ENCODE measurements at regions of chr1 and their contacts with region 1.

Region 1: DNA sequence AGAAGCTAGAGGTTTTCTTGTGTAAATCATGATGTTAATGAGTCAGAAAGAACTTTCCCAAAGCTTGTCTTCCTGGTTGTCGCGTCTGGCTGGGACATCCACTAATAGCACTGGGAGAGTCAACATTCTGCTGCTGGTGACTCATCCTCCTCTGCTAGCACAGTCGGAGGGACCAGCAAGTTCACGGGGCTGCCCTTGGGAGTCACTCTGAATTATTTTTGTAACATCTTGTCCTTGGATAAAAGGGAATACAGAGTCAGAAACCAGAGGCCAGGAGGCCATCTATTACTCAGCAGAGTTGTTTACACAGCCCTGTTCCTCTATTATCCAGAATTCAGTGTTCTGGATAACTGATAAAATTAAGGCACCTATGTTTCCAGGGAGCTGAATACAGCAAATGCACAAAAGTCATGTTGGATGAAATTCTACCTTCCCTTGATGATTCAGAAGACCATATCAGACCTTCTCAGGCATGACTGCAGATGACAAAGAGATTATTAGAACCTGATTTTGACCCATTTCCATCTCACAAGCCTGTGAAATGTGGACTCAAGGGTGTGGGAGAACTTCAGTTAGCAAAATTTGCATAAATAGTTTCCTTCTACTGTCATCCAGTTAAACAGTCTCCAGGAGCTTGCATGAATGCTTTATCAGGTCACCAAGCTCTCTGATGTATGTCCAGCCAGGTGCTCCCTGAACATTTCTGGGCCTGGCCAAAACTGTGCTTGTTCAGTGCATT is 68.1 kb downstream of the JAK1 start:
- DNase-seq: peak; percentile 91
- ATAC-seq: peak; percentile 99
- H3K4me3 ChIP-seq: no peak overlapping the region; a peak in 2 of 6 replicates
- H3K27ac ChIP-seq: peak overlapping the region; percentile 55
- H3K4me1 ChIP-seq: peaks cover 48% of the 10 kb centered on the region
- H3K27me3 ChIP-seq: no peaks in the 10 kb centered on the region
- CTCF ChIP-seq: no peak
- EP300 ChIP-seq: peak; percentile 36 to 64; a peak in 2 of 4 replicates
- POLR2A ChIP-seq: no peak
- RAD21 ChIP-seq: no peak

Region 2: GRCh38 chr1:64584479-64584878 is 313.8 kb before region 1 on chr1:
- CTCF ChIA-PET with region 1: no interaction called
- POLR2A ChIA-PET with region 1: no interaction called
- in situ Hi-C with region 1: no loop called
- intact Hi-C with region 1: no loop called
- DNase-seq: no peak
- ATAC-seq: no peak
- H3K4me3 ChIP-seq: no peak overlapping the region
- H3K27ac ChIP-seq: no peak overlapping the region
- H3K4me1 ChIP-seq: no peaks in the 10 kb centered on the region
- H3K27me3 ChIP-seq: no peaks in the 10 kb centered on the region; a peak in 1 of 5 replicates
- CTCF ChIP-seq: no peak
- EP300 ChIP-seq: no peak
- POLR2A ChIP-seq: no peak
- RAD21 ChIP-seq: no peak

Region 3: DNA sequence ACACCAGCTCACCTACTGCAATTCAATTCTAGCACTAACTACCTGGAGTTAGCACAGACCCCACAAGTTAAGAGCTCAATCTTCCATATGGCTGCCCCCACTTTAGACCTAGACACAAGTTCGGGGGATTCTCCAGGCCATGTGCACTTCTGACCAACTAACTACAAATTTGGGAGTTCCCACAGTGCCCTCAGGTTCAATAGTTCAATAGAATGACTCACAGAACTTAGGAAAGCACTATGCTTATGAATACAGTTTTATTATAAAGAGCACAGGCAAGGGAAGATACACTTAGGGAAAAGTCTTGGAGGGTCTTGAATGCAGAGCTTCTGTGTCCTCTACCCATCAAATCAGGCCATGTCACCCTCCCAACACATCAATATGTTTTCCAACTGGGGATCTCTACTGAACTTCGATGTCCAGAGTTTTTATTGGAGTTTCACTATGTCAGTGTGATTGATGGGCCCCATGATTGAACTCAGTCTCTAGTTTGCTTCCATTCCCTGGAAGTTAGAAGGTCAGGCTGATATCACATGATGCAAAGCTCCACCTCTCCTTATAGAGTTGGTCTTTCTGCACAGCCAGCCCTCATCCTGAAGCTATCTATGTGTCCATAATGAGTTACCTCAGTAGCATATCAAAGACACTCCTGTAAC is 107.3 kb before region 1 on chr1:
- CTCF ChIA-PET with region 1: no interaction called
- POLR2A ChIA-PET with region 1: no interaction called
- in situ Hi-C with region 1: no loop called
- intact Hi-C with region 1: no loop called
- DNase-seq: no peak
- ATAC-seq: no peak
- H3K4me3 ChIP-seq: no peak overlapping the region
- H3K27ac ChIP-seq: no peak overlapping the region
- H3K4me1 ChIP-seq: no peaks in the 10 kb centered on the region
- H3K27me3 ChIP-seq: no peaks in the 10 kb centered on the region
- CTCF ChIP-seq: no peak
- EP300 ChIP-seq: no peak
- POLR2A ChIP-seq: no peak
- RAD21 ChIP-seq: no peak

Region 4: DNA sequence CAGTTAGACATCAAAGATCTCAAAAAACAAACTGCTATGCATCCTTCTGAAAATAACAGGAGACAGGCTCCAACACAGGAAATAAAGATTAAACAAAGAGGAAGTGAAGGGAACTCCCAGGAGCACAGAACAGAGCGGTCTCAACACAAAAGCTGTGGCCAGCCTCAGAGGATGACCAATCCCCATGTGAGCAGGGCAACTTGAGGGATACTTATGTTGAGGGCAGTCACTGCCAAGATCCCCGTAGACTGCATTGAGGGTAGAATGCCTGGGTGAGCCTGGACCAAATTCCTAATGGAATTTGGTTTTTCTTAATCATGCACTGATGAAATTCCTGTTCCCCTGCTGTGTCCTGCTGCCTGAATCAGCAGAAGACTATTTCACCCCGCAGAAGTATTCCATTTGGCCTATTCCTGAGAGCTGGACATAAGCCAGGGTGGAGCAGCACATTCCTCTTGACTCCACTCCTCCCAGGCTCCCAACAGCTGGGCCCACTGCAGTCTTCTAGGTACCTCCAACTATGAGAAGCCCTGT is 19.1 kb after region 1 on chr1:
- CTCF ChIA-PET with region 1: no interaction called
- POLR2A ChIA-PET with region 1: interaction called, 13 read pairs
- in situ Hi-C with region 1: no loop called
- intact Hi-C with region 1: loop called (anchors 2 kb)
- DNase-seq: peak; percentile 60
- ATAC-seq: peak; percentile 38
- H3K4me3 ChIP-seq: no peak overlapping the region
- H3K27ac ChIP-seq: peak overlapping the region; percentile 91
- H3K4me1 ChIP-seq: peaks cover 82% of the 10 kb centered on the region
- H3K27me3 ChIP-seq: no peaks in the 10 kb centered on the region
- CTCF ChIP-seq: no peak
- EP300 ChIP-seq: no peak
- POLR2A ChIP-seq: no peak
- RAD21 ChIP-seq: no peak

Region 5: DNA sequence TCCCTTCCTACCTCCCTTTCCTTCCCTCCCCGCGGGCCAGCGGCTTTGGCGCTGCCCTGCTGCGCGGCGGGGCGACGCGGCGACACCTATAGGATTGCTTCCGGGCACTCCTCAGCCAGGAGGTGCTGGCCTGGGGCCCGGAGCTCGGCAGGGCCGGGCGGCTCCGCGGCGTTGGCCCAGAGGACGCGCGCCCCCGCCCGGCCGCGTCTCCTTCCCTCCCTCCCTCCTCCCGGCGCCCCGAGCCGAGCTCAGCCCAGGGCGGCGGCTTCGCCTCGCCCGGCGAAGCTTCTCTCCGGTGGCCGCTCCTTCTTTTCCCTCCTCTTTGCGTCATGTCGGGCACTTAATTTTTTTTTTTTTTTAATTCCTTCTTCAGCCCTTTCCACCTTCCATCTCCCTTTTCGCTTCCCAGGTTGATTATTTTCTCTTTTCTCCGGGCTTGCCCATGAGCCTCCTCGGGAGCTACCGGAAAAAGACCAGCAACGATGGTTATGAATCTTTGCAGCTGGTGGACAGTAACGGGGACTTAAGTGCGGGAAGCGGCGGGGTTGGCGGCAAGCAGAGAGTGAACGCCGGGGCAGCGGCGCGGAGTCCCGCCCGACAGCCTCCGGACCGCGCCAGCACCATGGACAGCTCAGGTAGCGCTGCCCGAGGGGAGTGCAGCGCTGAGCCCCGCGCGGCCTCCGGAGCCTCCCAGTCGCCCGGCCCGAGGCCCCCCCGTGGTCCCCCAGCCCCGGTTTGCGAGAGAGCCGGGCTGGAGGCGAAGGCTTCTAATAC is 411.2 kb after region 1 on chr1 and contains the start of gene DNAJC6:
- CTCF ChIA-PET with region 1: no interaction called
- POLR2A ChIA-PET with region 1: no interaction called
- in situ Hi-C with region 1: no loop called
- intact Hi-C with region 1: no loop called
- DNase-seq: peak; percentile 20
- ATAC-seq: peak; percentile 99
- H3K4me3 ChIP-seq: peak within 1 kb of the TSS; percentile 30 to 62 (median 59)
- H3K27ac ChIP-seq: no peak within 1 kb of the TSS
- H3K4me1 ChIP-seq: peaks cover 19% of the 10 kb centered on the region
- H3K27me3 ChIP-seq: 0 out of 5 replicates have a peak, but pooled peaks cover 0 to 4% of the 10 kb centered on the region in 2 experiments
- CTCF ChIP-seq: peak; percentile 43
- EP300 ChIP-seq: no peak
- POLR2A ChIP-seq: no peak
- RAD21 ChIP-seq: peak; percentile 35; the same call in 1 of the 2 replicates
- total RNA-seq, gene DNAJC6: 0.80 and 1.0 TPM in 2 replicates